WTC11 (cell line): ENCODE measurements at regions of chr20 and their contacts with region 1.

Region 1: DNA sequence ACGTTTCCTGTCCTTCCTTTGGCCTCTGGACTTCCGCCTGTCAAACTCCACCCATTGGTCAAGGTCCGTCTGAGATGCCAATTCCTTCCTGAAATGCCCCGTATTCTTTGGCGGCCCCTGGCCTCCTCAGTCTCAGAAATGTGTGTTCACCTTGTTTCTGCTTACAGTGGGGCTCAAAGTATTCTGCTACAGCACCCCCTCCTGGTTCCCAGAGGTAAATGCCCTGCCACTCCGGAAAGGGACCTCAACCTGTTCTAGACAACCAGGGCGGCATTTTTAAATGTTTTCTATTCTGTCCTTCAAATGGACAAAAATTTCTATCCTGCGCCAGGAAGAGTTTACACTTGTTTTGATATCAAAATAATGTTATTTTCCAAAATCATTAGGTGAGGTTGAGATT is 12.1 kb upstream of the PAX1 start:
- DNase-seq: peak; percentile 71
- ATAC-seq: peak; percentile 94
- H3K4me3 Mint-ChIP-seq: no peak overlapping the region
- H3K27ac Mint-ChIP-seq: no peak overlapping the region
- H3K4me1 Mint-ChIP-seq: peaks cover 5% of the 10 kb centered on the region
- H3K27me3 Mint-ChIP-seq: peaks cover 55% of the 10 kb centered on the region
- CTCF ChIP-seq: peak; percentile 65

Region 2: GRCh38 chr20:21640561-21641182 is 52.6 kb before region 1 on chr20:
- CTCF ChIA-PET with region 1: interaction called, 36 read pairs
- POLR2A ChIA-PET with region 1: no interaction called
- DNase-seq: peak; percentile 68
- ATAC-seq: peak; percentile 99
- H3K4me3 Mint-ChIP-seq: no peak overlapping the region
- H3K27ac Mint-ChIP-seq: no peak overlapping the region
- H3K4me1 Mint-ChIP-seq: no peaks in the 10 kb centered on the region
- H3K27me3 Mint-ChIP-seq: peaks cover 3% of the 10 kb centered on the region; the same call in 1 of the 2 replicates
- CTCF ChIP-seq: peak; percentile 30; the same call in 1 of the 2 replicates

Region 3: GRCh38 chr20:22027423-22027822 is 334.1 kb after region 1 on chr20:
- CTCF ChIA-PET with region 1: no interaction called
- POLR2A ChIA-PET with region 1: no interaction called
- DNase-seq: no peak
- ATAC-seq: no peak
- H3K4me3 Mint-ChIP-seq: no peak overlapping the region
- H3K27ac Mint-ChIP-seq: no peak overlapping the region
- H3K4me1 Mint-ChIP-seq: peaks cover 9% of the 10 kb centered on the region
- H3K27me3 Mint-ChIP-seq: no peaks in the 10 kb centered on the region; the same call in 1 of the 2 replicates
- CTCF ChIP-seq: no peak